ENCODE measurements at regions of chr16 and their contacts with region 1.

Region 1: GRCh38 chr16:35207059-35207999 is 1747.9 kb downstream of the TP53TG3F start:
- DNase-seq: no peak
- H3K4me3 ChIP-seq: no peak overlapping the region
- H3K27ac ChIP-seq: no peak overlapping the region
- H3K4me1 ChIP-seq: no peaks in the 10 kb centered on the region
- H3K27me3 ChIP-seq: no peaks in the 10 kb centered on the region
- CTCF ChIP-seq: no peak
- EP300 ChIP-seq: no peak
- POLR2A ChIP-seq: no peak

Region 2: GRCh38 chr16:35305476-35305875 is 98.1 kb after region 1 on chr16:
- in situ Hi-C with region 1: loop called in 1 of 4 experiments (anchors 25 kb)
- intact Hi-C with region 1: no loop called
- DNase-seq: no peak
- H3K4me3 ChIP-seq: no peak overlapping the region
- H3K27ac ChIP-seq: no peak overlapping the region
- H3K4me1 ChIP-seq: no peaks in the 10 kb centered on the region
- H3K27me3 ChIP-seq: no peaks in the 10 kb centered on the region
- CTCF ChIP-seq: no peak
- EP300 ChIP-seq: no peak
- POLR2A ChIP-seq: no peak

Region 3: GRCh38 chr16:35398197-35398596 is 190.9 kb after region 1 on chr16:
- in situ Hi-C with region 1: no loop called
- intact Hi-C with region 1: no loop called
- DNase-seq: no peak
- H3K4me3 ChIP-seq: no peak overlapping the region
- H3K27ac ChIP-seq: no peak overlapping the region
- H3K4me1 ChIP-seq: no peaks in the 10 kb centered on the region
- H3K27me3 ChIP-seq: no peaks in the 10 kb centered on the region
- CTCF ChIP-seq: no peak
- EP300 ChIP-seq: no peak
- POLR2A ChIP-seq: no peak

Measured in transverse colon (tissue), 4 donors.